CD8-positive, alpha-beta memory T cell (primary cell): ENCODE measurements at regions of chr1 and their contacts with region 1.

Region 1: GRCh38 chr1:13699936-13700520 is at the start of gene PRDM2:
- DNase-seq: peak; percentile 52 to 78 (median 74)
- H3K4me3 ChIP-seq: peak within 1 kb of the TSS; percentile 67
- H3K4me3 Mint-ChIP-seq: peak within 1 kb of the TSS; percentile 93 to 98 (median 96)
- H3K27ac ChIP-seq: peak within 1 kb of the TSS; percentile 90
- H3K27ac Mint-ChIP-seq: peak within 1 kb of the TSS; percentile 97 to 100 (median 99)
- H3K4me1 ChIP-seq: peaks cover 30% of the 10 kb centered on the region
- H3K4me1 Mint-ChIP-seq: peaks cover 41 to 58% (median 54%) of the 10 kb centered on the region in 3 donors
- H3K27me3 ChIP-seq: peaks cover 3% of the 10 kb centered on the region
- H3K27me3 Mint-ChIP-seq: peaks cover 0 to 5% of the 10 kb centered on the region in 2 donors
- total RNA-seq, gene PRDM2: 67.9 to 70.1 TPM

Region 2: GRCh38 chr1:13725714-13726175 is 25.7 kb after region 1 on chr1:
- CTCF ChIA-PET with region 1: interaction called, 26 read pairs
- POLR2A ChIA-PET with region 1: interaction called, 23 read pairs
- DNase-seq: peak; percentile 25 to 71 (median 50)
- H3K4me3 ChIP-seq: no peak overlapping the region
- H3K4me3 Mint-ChIP-seq: peak overlapping the region in 1 of 7 donors; percentile 6
- H3K27ac ChIP-seq: no peak overlapping the region
- H3K27ac Mint-ChIP-seq: peak overlapping the region; percentile 12 to 92 (median 73)
- H3K4me1 ChIP-seq: peaks cover 28% of the 10 kb centered on the region
- H3K4me1 Mint-ChIP-seq: peaks cover 49 to 77% (median 63%) of the 10 kb centered on the region in 3 donors
- H3K27me3 ChIP-seq: no peaks in the 10 kb centered on the region
- H3K27me3 Mint-ChIP-seq: no peaks in the 10 kb centered on the region

Region 3: GRCh38 chr1:13730751-13731482 is 30.9 kb after region 1 on chr1:
- CTCF ChIA-PET with region 1: interaction called, 26 read pairs
- POLR2A ChIA-PET with region 1: interaction called, 23 read pairs
- DNase-seq: peak; percentile 67 to 92 (median 89)
- H3K4me3 ChIP-seq: peak overlapping the region; percentile 33
- H3K4me3 Mint-ChIP-seq: peak overlapping the region; percentile 70 to 93 (median 84)
- H3K27ac ChIP-seq: peak overlapping the region; percentile 57
- H3K27ac Mint-ChIP-seq: peak overlapping the region; percentile 96 to 100 (median 98)
- H3K4me1 ChIP-seq: peaks cover 67% of the 10 kb centered on the region
- H3K4me1 Mint-ChIP-seq: peaks cover 78 to 95% (median 93%) of the 10 kb centered on the region in 3 donors
- H3K27me3 ChIP-seq: no peaks in the 10 kb centered on the region
- H3K27me3 Mint-ChIP-seq: no peaks in the 10 kb centered on the region

Region 4: DNA sequence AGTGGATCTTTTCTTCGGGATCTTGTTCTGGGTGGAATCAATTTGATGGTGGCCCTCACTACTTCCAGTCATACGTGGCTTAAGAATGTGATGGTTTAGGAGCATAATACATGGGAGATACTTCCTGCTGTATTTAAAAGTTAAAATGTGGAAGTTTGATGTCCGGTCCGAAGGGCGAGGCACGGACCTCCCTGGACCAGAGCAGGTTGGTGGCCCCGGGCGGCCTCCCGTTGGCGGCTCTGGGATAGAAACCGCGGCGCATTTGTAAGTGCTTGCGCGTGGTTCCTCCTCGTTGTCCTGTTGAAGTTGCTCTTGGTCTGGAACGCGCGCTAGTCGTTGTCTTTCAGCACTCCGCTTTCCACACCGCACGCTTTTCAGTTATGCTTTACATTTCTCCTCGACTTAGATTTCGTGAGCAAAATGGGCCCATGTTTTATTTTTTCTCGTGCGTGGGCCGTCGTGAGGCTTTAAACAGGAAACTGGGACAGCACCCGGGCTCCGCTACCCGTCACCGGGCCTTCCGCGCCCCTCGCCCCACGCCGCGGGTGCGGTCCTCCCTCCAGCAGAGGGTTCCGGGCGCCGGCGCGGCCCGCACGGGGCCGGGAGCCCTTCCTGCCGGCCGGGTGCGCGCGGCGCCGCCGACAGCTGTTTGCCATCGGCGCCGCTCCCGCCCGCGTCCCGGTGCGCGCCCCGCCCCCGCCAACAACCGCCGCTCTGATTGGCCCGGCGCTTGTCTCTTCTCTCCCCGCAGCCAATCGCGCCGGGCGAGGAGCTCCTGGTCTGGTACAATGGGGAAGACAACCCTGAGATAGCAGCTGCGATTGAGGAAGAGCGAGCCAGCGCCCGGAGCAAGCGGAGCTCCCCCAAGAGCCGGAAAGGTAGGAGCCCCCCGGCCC is 48.8 kb after region 1 on chr1:
- CTCF ChIA-PET with region 1: interaction called, 5 read pairs
- POLR2A ChIA-PET with region 1: interaction called, 48 read pairs
- DNase-seq: peak; percentile 96 to 97 (median 96)
- H3K4me3 ChIP-seq: peak overlapping the region; percentile 64
- H3K4me3 Mint-ChIP-seq: peak overlapping the region; percentile 88 to 97 (median 92)
- H3K27ac ChIP-seq: peak overlapping the region; percentile 84
- H3K27ac Mint-ChIP-seq: peak overlapping the region; percentile 88 to 97 (median 96)
- H3K4me1 ChIP-seq: peaks cover 44% of the 10 kb centered on the region
- H3K4me1 Mint-ChIP-seq: peaks cover 44 to 72% (median 68%) of the 10 kb centered on the region in 3 donors
- H3K27me3 ChIP-seq: no peaks in the 10 kb centered on the region
- H3K27me3 Mint-ChIP-seq: peaks cover 0 to 4% of the 10 kb centered on the region in 2 donors